ENCODE measurements at regions of chr11 and their contacts with region 1.

Region 1: DNA sequence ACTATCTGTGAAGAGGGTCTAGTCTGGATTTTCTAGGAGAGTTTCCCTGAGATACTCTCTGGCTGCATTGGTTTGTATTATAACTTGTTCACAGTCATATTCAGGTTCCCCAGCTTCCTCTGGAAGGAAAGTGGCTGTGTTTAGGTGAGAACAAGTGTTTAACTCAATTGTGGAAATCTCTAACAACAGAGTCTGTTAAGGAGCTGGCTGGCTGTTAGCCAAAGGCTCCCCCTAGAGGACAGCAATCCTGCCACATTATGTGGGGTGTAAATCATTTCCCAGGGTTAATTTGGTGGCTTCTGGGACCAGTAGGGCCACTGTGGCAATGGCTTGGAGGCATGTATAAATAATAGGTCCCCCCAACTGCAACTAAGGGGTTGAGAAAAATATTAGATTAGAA is 18.4 kb downstream of the MS4A6E start:
- DNase-seq: no peak
- H3K4me3 ChIP-seq: no peak overlapping the region
- H3K27ac ChIP-seq: no peak overlapping the region
- H3K4me1 ChIP-seq: no peaks in the 10 kb centered on the region
- H3K27me3 ChIP-seq: no peaks in the 10 kb centered on the region; the same call in 1 of the 2 replicates
- CTCF ChIP-seq: peak; percentile 56
- EP300 ChIP-seq: no peak
- RAD21 ChIP-seq: no peak

Region 2: DNA sequence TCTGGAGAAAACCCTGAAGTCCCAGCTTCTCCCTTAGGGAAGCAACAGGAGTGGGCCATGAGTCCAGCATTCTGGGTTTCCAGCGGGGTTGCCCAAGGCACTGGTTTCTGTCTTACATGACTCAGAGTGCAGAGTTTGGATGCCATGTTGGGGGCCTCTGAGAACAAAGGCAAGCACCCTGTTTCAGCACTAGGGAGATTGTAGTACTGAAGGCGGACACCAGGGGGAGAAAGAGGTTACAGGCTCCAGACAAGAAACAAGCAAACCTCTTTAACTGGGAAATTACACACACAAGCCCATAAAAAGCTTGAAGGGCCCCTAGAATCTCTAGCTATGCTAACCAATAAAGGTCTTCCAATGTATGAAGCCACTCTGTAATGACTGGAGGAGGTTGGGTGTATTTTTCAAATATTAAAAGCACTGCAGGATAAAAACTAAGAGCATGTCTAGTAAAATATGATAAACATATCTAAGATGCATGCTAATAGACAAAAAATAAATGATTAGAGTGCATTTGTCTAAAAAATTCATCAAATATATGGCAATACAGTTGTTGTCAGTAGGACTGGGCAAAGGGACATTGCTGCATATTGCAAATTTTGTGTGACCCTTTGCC is 11.4 kb before region 1 on chr11:
- CTCF ChIA-PET with region 1: interaction called, 14 read pairs
- POLR2A ChIA-PET with region 1: no interaction called
- DNase-seq: peak; percentile 47
- H3K4me3 ChIP-seq: no peak overlapping the region
- H3K27ac ChIP-seq: no peak overlapping the region
- H3K4me1 ChIP-seq: no peaks in the 10 kb centered on the region
- H3K27me3 ChIP-seq: no peaks in the 10 kb centered on the region
- CTCF ChIP-seq: peak; percentile 68
- EP300 ChIP-seq: no peak
- RAD21 ChIP-seq: peak; percentile 7; the same call in 1 of the 2 replicates

Region 3: DNA sequence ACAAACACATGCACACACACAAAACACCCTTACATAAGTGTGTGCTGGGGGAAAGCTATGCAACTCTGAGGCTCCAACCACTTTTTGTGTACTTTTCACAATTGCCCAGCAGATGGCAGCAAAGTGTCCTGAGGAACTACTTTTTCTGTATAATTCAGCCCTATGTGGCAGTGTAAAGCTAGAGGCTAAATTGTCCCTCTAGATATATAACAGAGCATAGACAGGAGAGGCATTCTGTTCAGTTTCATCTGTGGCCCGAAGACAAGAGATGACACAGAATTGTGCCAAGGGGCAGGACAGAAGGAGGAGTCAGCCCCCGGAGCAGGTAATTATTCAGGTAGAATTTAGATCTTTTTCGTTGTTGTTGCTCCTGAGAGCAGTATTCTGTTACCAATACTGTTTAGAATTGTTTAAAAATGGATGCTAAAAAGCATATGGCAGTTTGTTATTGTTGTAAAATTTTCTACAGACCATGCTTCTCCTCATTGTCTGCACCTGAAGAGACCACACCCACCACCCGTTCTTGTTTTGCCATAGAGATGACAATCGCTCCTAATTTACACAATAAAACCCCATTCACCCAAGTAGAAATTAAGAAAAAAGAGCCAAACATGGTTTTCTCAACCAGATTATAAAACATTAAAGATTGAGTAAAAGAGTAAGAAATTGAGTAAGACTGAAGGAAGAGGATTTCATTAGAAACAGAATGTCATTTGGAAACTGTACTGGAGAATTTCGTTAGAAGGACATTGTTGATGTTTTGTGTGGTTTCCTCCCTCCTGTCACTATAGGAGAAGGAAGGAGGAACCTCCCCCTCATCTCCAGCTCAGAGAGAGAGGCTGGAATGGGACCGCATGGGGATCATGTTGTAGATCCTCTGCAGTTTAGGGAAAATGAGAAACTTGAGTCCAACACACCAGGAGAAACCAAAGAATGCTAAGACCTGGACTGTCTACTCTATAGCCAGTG is 18.3 kb after region 1 on chr11:
- CTCF ChIA-PET with region 1: interaction called, 17 read pairs
- POLR2A ChIA-PET with region 1: no interaction called
- DNase-seq: peak; percentile 40
- H3K4me3 ChIP-seq: no peak overlapping the region
- H3K27ac ChIP-seq: no peak overlapping the region
- H3K4me1 ChIP-seq: no peaks in the 10 kb centered on the region
- H3K27me3 ChIP-seq: peaks cover 18% of the 10 kb centered on the region
- CTCF ChIP-seq: peak; percentile 73
- EP300 ChIP-seq: no peak
- RAD21 ChIP-seq: peak; percentile 61

Measured in SK-N-SH (cell line).